Caco-2 (cell line): ENCODE measurements at regions of chr2 and their contacts with region 1.

Region 1: GRCh38 chr2:99198103-99199010 is 17.4 kb downstream of the MRPL30 start:
- DNase-seq: no peak
- H3K4me3 ChIP-seq: no peak overlapping the region
- H3K4me3 Mint-ChIP-seq: no peak overlapping the region
- H3K27ac Mint-ChIP-seq: no peak overlapping the region
- H3K4me1 ChIP-seq: peaks cover 4% of the 10 kb centered on the region; the same call in 1 of the 2 replicates
- H3K4me1 Mint-ChIP-seq: no peaks in the 10 kb centered on the region
- H3K27me3 ChIP-seq: no peaks in the 10 kb centered on the region
- H3K27me3 Mint-ChIP-seq: no peaks in the 10 kb centered on the region
- CTCF ChIP-seq: peak in 1 of 2 experiments; percentile 34

Region 2: DNA sequence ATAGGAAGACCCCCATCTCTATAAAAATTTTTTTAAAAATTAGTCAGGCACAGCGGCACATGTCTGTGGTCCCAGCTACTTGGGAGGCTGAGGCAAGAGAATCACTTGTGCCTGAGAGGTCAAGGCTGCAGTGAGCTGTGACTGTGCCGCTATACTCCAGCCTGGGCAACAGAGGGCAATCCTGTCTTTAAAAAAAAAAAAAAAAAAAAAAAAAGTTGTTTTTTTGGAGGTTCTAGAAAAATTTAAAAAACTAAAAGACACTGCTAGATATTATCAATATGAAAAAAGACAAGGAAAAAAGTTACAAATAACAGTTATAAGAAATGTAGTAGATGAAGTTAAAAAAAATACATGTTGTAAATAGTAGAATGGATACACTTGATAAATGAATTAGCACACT is 112.9 kb before region 1 on chr2:
- CTCF ChIA-PET with region 1: no interaction called
- POLR2A ChIA-PET with region 1: no interaction called
- intact Hi-C with region 1: loop called (anchors 5 kb)
- DNase-seq: peak in 1 of 2 experiments; percentile 14
- H3K4me3 ChIP-seq: no peak overlapping the region
- H3K4me3 Mint-ChIP-seq: no peak overlapping the region
- H3K27ac Mint-ChIP-seq: no peak overlapping the region
- H3K4me1 ChIP-seq: no peaks in the 10 kb centered on the region
- H3K4me1 Mint-ChIP-seq: no peaks in the 10 kb centered on the region
- H3K27me3 ChIP-seq: no peaks in the 10 kb centered on the region
- H3K27me3 Mint-ChIP-seq: peaks cover 6% of the 10 kb centered on the region
- CTCF ChIP-seq: peak; percentile 35 to 60

Region 3: DNA sequence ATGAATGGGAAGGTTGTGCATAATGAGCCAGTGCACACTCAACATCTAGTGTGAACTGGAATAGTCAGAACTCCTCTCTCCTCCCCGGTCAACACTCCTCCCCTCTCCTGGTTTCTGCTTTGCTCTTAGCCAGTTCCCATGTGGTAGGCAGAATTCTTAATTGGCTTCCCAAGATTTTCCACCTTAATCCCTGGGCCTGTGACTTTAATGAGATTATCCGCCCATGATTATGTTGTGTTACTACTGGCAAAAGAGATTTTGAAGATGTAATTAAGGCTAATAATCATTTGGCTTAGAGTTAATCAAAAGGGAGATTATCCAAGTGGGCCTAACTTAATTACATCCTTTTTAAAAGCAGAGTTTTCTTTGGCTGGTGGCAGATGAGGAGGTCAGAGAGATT is 325.7 kb after region 1 on chr2:
- CTCF ChIA-PET with region 1: no interaction called
- POLR2A ChIA-PET with region 1: no interaction called
- intact Hi-C with region 1: no loop called
- DNase-seq: no peak
- H3K4me3 ChIP-seq: no peak overlapping the region
- H3K4me3 Mint-ChIP-seq: no peak overlapping the region
- H3K27ac Mint-ChIP-seq: no peak overlapping the region
- H3K4me1 ChIP-seq: no peaks in the 10 kb centered on the region
- H3K4me1 Mint-ChIP-seq: no peaks in the 10 kb centered on the region
- H3K27me3 ChIP-seq: no peaks in the 10 kb centered on the region
- H3K27me3 Mint-ChIP-seq: peaks cover 11% of the 10 kb centered on the region
- CTCF ChIP-seq: no peak